ENCODE measurements at regions of chr7 and their contacts with region 1.

Region 1: GRCh38 chr7:150753826-150754603 is 16.8 kb downstream of the GIMAP5 start:
- DNase-seq: peak; percentile 80
- H3K4me3 ChIP-seq: no peak overlapping the region
- H3K27ac ChIP-seq: no peak overlapping the region
- H3K4me1 ChIP-seq: peaks cover 9% of the 10 kb centered on the region
- H3K27me3 ChIP-seq: no peaks in the 10 kb centered on the region
- CTCF ChIP-seq: peak; percentile 60

Region 2: GRCh38 chr7:150448789-150449147 is 305.2 kb before region 1 on chr7:
- CTCF ChIA-PET with region 1: interaction called, 11 read pairs
- POLR2A ChIA-PET with region 1: no interaction called
- intact Hi-C with region 1: loop called (anchors 2 kb)
- DNase-seq: peak; percentile 81
- H3K4me3 ChIP-seq: no peak overlapping the region
- H3K27ac ChIP-seq: no peak overlapping the region
- H3K4me1 ChIP-seq: peaks cover 4% of the 10 kb centered on the region
- H3K27me3 ChIP-seq: no peaks in the 10 kb centered on the region
- CTCF ChIP-seq: peak; percentile 97

Region 3: DNA sequence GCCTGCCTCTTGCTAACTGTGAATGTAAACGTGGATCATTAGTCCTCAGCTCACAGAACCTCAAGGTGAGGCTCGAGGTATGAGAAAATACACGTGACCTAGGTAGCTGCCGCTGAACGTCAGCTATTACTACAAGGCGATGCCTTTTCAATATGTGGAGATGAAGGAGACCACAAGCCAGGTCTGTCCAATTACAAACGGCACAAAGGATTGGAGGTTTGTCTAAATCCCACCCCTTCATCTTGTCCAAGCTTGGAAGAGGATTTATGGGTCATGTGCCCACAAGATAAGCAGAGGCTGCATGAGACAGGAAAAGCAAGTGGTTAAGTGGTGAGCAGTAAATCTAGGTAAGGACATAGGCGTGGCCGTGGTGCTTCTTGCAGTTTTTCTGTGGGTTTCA is 452.9 kb after region 1 on chr7:
- CTCF ChIA-PET with region 1: no interaction called
- POLR2A ChIA-PET with region 1: no interaction called
- intact Hi-C with region 1: no loop called
- DNase-seq: no peak
- H3K4me3 ChIP-seq: no peak overlapping the region
- H3K27ac ChIP-seq: no peak overlapping the region
- H3K4me1 ChIP-seq: no peaks in the 10 kb centered on the region
- H3K27me3 ChIP-seq: peaks cover 28% of the 10 kb centered on the region
- CTCF ChIP-seq: no peak